Right ventricle myocardium superior (tissue), 1 donor: ENCODE measurements at regions of chr14 and their contacts with region 1.

Region 1: GRCh38 chr14:70027785-70028428 is 148.7 kb downstream of the SMOC1 start:
- DNase-seq: peak; percentile 85
- ATAC-seq: peak; percentile 87

Region 2: GRCh38 chr14:69818757-69819191 is 209.1 kb before region 1 on chr14:
- intact Hi-C with region 1: loop called (anchors 2 kb)
- DNase-seq: no peak
- ATAC-seq: peak; percentile 79

Region 3: GRCh38 chr14:69985456-69985855 is 42.5 kb before region 1 on chr14:
- intact Hi-C with region 1: no loop called
- DNase-seq: no peak
- ATAC-seq: peak; percentile 49

Region 4: DNA sequence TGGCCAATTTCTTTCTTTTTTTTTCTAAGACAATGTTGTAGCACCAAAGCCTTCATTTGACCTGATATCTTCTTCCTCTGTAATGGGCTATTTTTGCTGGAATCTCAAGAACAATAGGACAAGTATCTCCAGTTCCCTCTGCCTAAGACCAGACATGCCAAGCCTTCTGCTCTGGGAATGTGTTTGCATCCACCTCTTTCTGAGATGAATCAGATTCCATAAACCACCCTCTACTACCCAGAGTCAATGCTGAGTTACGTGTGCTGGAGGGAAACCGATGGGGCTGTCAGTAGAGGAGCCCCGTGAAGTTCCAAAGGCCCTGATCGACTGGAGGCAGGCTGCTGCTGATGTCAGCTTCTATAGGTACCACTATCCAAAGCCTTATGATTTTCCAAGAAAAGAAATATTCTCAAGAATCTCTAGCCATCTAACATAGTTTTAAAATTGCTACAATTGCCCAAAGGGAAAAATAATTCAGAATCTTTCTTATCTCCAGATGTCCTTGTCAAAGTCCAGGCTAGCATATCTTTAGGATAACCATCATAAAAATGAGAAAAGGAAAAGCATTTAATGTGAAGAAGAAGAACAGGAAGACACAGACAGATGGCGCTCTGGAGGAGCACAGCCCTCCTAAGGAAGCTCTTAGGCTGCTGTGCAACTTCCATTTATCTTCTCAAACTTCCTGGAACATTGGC is 58.9 kb after region 1 on chr14:
- intact Hi-C with region 1: no loop called
- DNase-seq: no peak
- ATAC-seq: no peak